Endothelial cell of umbilical vein (primary cell): ENCODE measurements at regions of chr7 and their contacts with region 1.

Region 1: DNA sequence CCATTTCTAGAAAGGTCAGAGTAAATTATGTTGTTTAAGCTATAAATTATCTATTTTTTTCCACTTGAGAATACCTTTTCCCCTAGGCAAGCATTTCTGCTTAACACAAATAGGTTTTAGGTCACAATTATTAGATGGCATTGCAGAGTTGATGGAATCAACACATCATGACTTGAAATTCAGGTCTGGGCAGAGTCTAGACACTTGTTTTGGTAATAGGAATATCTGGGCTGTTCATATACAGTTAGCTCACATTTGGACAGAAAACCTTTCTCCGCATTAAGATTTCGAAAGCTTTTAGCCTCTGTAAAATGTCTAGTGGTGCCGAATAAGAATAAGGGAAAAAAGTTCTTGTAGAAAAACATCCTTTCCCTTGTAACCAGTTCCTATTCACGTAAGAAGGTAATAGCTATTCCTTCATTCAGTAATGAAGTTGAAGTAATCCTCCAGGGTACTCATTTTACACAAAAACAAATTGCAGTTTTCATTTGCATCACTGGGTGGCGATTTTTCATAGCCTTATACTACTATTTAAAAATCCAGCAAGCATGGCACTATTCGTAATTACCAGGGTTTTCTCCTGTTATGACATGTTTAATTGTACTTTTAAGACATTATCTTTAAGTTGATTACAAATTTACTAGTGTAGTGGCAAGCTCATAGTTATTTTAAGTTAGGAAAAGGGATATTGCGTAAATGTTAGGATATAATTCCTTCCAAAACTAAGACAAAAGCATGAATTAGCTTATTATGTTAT is 37.0 kb downstream of the RPA3 start:
- DNase-seq: peak; percentile 88
- H3K4me3 ChIP-seq: no peak overlapping the region
- H3K27ac ChIP-seq: no peak overlapping the region
- H3K4me1 ChIP-seq: no peaks in the 10 kb centered on the region
- H3K27me3 ChIP-seq: no peaks in the 10 kb centered on the region
- CTCF ChIP-seq: peak; percentile 32 to 38
- POLR2A ChIP-seq: no peak

Region 2: GRCh38 chr7:7375538-7375937 is 305.8 kb before region 1 on chr7:
- CTCF ChIA-PET with region 1: no interaction called
- POLR2A ChIA-PET with region 1: no interaction called
- dilution Hi-C with region 1: no loop called
- intact Hi-C with region 1: no loop called
- DNase-seq: no peak
- H3K4me3 ChIP-seq: no peak overlapping the region
- H3K27ac ChIP-seq: no peak overlapping the region
- H3K4me1 ChIP-seq: no peaks in the 10 kb centered on the region
- H3K27me3 ChIP-seq: no peaks in the 10 kb centered on the region
- CTCF ChIP-seq: no peak
- POLR2A ChIP-seq: no peak

Region 3: DNA sequence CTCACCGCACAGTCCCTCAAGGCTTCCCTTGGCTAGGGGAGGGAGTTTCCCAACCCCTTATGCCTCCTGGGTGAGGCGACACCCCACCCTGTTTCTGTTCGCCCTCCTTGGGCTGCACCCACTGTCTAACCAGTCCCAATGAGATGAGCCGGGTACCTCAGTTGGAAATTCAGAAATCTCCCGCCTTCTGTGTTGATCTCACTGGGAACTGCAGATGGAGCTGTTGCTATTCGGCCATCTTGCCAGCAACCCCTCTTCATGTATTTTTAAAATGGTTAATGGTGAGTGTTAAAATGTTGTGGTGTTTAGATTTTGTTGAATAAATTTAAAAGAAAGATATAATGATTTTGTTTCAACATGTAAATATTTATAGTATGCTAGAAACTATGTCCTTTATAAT is 18.8 kb before region 1 on chr7:
- CTCF ChIA-PET with region 1: interaction called, 15 read pairs
- POLR2A ChIA-PET with region 1: no interaction called
- dilution Hi-C with region 1: no loop called
- intact Hi-C with region 1: no loop called
- DNase-seq: no peak
- H3K4me3 ChIP-seq: no peak overlapping the region
- H3K27ac ChIP-seq: no peak overlapping the region
- H3K4me1 ChIP-seq: no peaks in the 10 kb centered on the region
- H3K27me3 ChIP-seq: no peaks in the 10 kb centered on the region
- CTCF ChIP-seq: peak in 1 of 2 donors; percentile 5
- POLR2A ChIP-seq: no peak

Region 4: GRCh38 chr7:7702826-7703225 is 21.5 kb after region 1 on chr7:
- CTCF ChIA-PET with region 1: interaction called, 121 read pairs
- POLR2A ChIA-PET with region 1: no interaction called
- dilution Hi-C with region 1: no loop called
- intact Hi-C with region 1: no loop called
- DNase-seq: no peak
- H3K4me3 ChIP-seq: no peak overlapping the region
- H3K27ac ChIP-seq: no peak overlapping the region
- H3K4me1 ChIP-seq: no peaks in the 10 kb centered on the region
- H3K27me3 ChIP-seq: no peaks in the 10 kb centered on the region
- CTCF ChIP-seq: no peak
- POLR2A ChIP-seq: no peak

Region 5: DNA sequence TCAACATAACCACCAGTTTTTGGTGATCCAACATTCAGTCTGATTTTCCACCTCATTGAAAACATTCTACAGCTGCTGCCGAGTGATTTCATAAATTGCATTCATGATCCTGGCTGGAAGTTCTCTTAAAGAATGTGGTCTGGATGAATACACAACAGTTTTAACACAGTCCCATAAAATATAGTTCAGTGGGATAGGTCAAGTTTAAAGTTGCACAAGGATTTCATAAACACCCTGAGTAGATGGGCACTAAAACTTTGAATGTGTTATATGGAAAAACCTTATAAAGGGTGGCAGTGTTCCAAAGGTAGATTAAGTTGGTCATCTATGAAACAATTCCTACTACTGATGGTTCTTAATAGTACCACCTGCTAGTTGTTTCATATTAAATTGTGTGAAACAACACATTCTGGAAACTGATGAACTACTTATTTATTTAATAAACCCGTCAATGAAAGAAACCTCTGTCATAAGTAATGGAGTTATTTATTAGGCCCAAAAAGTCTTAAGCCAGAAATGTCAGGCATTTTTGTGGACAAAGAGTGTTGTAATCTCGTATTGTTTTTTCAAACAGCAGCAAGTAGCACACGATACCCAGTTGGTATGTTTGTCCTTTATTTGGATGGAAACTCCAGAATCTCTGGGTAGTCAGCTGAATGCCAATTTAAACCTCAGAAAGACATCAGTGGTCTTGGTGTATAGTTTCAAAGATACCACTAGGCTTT is 51.4 kb after region 1 on chr7:
- CTCF ChIA-PET with region 1: interaction called, 12 read pairs
- POLR2A ChIA-PET with region 1: no interaction called
- dilution Hi-C with region 1: no loop called
- intact Hi-C with region 1: no loop called
- DNase-seq: peak; percentile 5
- H3K4me3 ChIP-seq: no peak overlapping the region
- H3K27ac ChIP-seq: no peak overlapping the region
- H3K4me1 ChIP-seq: peaks cover 17% of the 10 kb centered on the region
- H3K27me3 ChIP-seq: no peaks in the 10 kb centered on the region
- CTCF ChIP-seq: no peak
- POLR2A ChIP-seq: no peak

Region 6: DNA sequence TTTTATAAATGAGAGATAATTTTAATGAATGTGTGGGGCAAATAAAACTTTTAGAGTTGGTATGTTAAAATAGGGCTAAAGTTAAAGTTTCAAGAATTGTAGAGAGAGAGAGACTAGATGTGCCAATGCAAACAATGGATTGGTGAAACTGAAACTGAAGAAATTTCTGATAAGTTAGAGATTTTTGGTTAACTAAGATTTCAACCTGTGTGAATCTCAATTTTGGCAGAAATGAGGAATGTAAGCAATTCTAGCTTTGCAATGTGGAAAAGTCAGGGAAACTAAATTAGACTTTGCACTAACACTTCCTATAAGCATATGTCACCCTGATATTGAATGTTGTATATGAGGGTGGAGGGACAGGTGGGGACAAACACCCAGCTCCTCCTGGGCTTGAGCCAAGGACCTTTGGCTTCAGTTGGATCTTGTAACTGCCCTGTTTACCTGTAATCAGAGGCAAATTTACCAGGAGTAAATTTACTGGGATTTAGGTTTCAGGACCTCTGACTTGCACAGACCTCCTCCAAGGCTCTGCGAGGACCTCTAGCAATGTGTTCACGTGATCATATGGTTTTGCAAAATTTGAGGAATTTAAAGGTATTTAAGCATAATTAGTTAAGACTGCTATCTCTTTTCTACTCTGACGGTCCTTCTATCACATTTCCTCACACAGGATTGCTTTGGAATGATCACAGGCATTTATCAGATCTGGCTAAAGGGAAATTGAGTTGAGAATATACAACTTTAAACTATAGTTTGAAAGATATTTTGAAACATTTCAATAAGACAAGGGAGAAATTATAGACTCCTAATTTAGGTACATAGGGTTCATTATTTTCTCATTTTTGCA is 70.1 kb after region 1 on chr7:
- CTCF ChIA-PET with region 1: interaction called, 153 read pairs
- POLR2A ChIA-PET with region 1: no interaction called
- dilution Hi-C with region 1: no loop called
- intact Hi-C with region 1: no loop called
- DNase-seq: no peak
- H3K4me3 ChIP-seq: no peak overlapping the region
- H3K27ac ChIP-seq: no peak overlapping the region
- H3K4me1 ChIP-seq: no peaks in the 10 kb centered on the region
- H3K27me3 ChIP-seq: no peaks in the 10 kb centered on the region
- CTCF ChIP-seq: no peak
- POLR2A ChIP-seq: no peak

Region 7: DNA sequence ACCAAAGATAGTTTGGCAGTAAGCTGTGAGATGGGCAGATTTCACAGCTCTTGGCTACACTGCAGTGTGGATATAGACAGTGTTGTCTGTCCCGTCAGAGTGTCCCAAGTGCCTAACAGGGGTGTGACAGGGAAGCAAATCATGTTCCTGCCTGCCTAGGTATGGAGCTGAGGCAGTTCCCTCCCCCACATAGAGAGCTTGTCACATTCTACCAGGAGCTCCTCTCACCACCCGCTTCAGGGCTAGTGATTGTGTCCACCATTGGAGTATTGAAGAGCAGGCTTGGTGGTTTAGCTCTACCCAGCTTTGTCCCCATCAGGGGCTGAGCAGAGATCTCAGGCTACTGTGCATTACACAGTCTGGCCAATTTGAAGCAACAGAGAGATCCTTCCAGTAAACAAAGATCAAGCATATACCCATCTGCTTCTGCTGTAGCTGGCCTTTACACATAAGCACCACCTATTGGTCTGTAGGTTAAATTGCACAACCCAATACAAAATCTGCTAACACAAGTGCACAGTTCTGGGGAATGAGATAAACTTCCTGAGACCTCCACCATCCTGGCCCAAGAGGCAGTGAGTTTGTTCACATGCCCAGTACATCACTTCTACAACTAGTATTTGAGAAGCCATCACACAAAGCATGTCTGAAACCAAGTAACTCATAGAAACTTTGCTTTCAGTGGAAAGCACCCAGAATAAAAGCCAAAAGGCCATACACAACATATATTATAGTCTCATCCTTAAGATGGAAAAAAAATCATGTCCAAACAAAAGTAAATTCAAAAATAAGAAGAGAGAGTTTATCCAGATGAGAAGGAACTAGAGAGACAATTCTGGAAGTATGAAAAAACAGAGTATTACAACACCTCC is 354.5 kb after region 1 on chr7:
- CTCF ChIA-PET with region 1: interaction called, 83 read pairs
- POLR2A ChIA-PET with region 1: no interaction called
- dilution Hi-C with region 1: no loop called
- intact Hi-C with region 1: loop called (anchors 1 kb)
- DNase-seq: peak; percentile 46
- H3K4me3 ChIP-seq: no peak overlapping the region
- H3K27ac ChIP-seq: no peak overlapping the region
- H3K4me1 ChIP-seq: no peaks in the 10 kb centered on the region
- H3K27me3 ChIP-seq: no peaks in the 10 kb centered on the region
- CTCF ChIP-seq: peak; percentile 33 to 46
- POLR2A ChIP-seq: no peak

Region 8: DNA sequence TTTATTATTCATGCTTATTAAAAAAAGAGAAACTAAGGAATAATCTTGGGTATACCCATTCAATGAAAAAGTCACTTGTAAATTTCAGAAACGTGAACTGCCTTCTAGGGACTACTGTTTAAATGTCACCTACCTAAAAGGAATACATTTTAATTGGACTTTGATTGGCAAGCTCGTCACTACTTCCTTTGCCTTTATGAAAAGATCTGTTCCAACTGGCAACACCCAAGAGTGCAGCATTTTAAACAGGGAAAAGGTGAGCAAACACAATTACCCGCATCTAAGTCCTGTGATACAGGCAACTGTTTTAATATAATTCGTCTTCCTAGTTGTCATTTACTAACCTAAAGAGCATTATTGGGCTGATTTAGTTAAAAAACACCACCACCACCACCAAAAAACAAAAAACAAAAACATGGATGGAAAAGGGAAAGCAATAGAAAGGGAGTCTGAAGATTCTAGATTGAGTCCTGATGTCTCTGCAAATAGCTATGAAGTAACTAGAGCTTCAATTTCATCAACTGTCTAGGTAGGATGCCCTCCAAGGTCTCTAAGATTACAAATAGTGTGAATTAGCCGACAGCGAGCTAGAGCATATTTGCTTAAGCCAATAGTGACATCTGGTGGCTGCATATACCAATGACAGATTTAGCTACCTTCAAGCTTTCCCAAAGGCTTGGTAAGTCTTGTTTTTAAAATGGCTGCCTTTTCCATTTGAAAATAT is 614.4 kb after region 1 on chr7:
- CTCF ChIA-PET with region 1: interaction called, 51 read pairs
- POLR2A ChIA-PET with region 1: no interaction called
- dilution Hi-C with region 1: no loop called
- intact Hi-C with region 1: loop called (anchors 2 kb)
- DNase-seq: peak; percentile 78
- H3K4me3 ChIP-seq: no peak overlapping the region
- H3K27ac ChIP-seq: no peak overlapping the region
- H3K4me1 ChIP-seq: no peaks in the 10 kb centered on the region
- H3K27me3 ChIP-seq: peaks cover 3 to 8% of the 10 kb centered on the region in 2 experiments
- CTCF ChIP-seq: peak; percentile 56 to 64
- POLR2A ChIP-seq: no peak